ENCODE measurements at regions of chr12 and their contacts with region 1.

Region 1: GRCh38 chr12:14514154-14514842 is 53.4 kb downstream of the PLBD1 start:
- DNase-seq: no peak
- ATAC-seq: peak; percentile 44

Region 2: GRCh38 chr12:14554281-14555007 is 40.1 kb after region 1 on chr12:
- intact Hi-C with region 1: loop called (anchors 5 kb)
- DNase-seq: peak; percentile 94
- ATAC-seq: peak; percentile 94

Region 3: GRCh38 chr12:14618983-14619382 is 104.7 kb after region 1 on chr12:
- intact Hi-C with region 1: loop called (anchors 2 kb)
- DNase-seq: no peak
- ATAC-seq: no peak